ENCODE measurements at regions of chrX and their contacts with region 1.

Region 1: GRCh38 chrX:37976153-37976552 is 30.2 kb upstream of the SYTL5 start:
- DNase-seq: no peak
- ATAC-seq: no peak
- H3K4me3 Mint-ChIP-seq: no peak overlapping the region
- H3K27ac Mint-ChIP-seq: no peak overlapping the region
- H3K4me1 Mint-ChIP-seq: peaks cover 11% of the 10 kb centered on the region
- H3K27me3 Mint-ChIP-seq: peaks cover 18% of the 10 kb centered on the region

Region 2: DNA sequence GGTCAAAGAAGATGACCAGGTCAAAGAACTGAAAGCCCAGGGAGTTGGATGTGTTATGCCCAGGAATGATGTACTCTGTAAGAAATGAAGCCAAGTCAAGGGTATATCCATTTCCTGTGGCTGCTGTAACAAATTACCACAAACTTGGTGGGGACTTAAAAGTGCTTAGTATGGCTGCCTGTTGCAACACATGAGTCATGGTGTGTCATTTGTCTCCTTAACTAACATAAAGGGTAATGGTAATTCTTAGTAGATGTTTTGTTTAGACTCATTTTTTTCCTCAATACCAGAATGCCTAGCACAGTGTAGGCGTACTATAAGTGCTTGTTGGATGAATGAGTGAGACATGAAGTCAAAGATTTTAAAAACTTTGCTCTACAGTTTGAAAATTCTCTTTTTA is 75.9 kb after region 1 on chrX:
- CTCF ChIA-PET with region 1: no interaction called
- POLR2A ChIA-PET with region 1: no interaction called
- intact Hi-C with region 1: loop called in 1 of 2 experiments (anchors 1 kb)
- DNase-seq: peak; percentile 11
- ATAC-seq: peak; percentile 96
- H3K4me3 Mint-ChIP-seq: no peak overlapping the region
- H3K27ac Mint-ChIP-seq: no peak overlapping the region
- H3K4me1 Mint-ChIP-seq: no peaks in the 10 kb centered on the region
- H3K27me3 Mint-ChIP-seq: peaks cover 2% of the 10 kb centered on the region